Spleen (tissue), 13 donors: ENCODE measurements at regions of chr2 and their contacts with region 1.

Region 1: GRCh38 chr2:203909261-203909967 is 27.1 kb upstream of the ICOS start:
- DNase-seq: no peak
- H3K4me3 ChIP-seq: peak overlapping the region in 3 of 8 donors; percentile 21 to 51 (median 37)
- H3K27ac ChIP-seq: peak overlapping the region in 7 of 8 donors; percentile 18 to 68 (median 54)
- H3K4me1 ChIP-seq: peaks cover 0 to 28% (median 17%) of the 10 kb centered on the region in 6 donors
- H3K27me3 ChIP-seq: no peaks in the 10 kb centered on the region
- CTCF ChIP-seq: peak; percentile 25 to 81 (median 66)
- POLR2A ChIP-seq: no peak

Region 2: GRCh38 chr2:202577250-202578183 is 1331.9 kb before region 1 on chr2:
- intact Hi-C with region 1: loop called (anchors 10 kb)
- DNase-seq: no peak
- H3K4me3 ChIP-seq: no peak overlapping the region
- H3K27ac ChIP-seq: no peak overlapping the region
- H3K4me1 ChIP-seq: no peaks in the 10 kb centered on the region
- H3K27me3 ChIP-seq: no peaks in the 10 kb centered on the region
- CTCF ChIP-seq: no peak
- POLR2A ChIP-seq: no peak

Region 3: GRCh38 chr2:203484266-203485112 is 424.9 kb before region 1 on chr2:
- intact Hi-C with region 1: loop called (anchors 10 kb)
- DNase-seq: no peak
- H3K4me3 ChIP-seq: no peak overlapping the region
- H3K27ac ChIP-seq: peak overlapping the region in 1 of 8 donors; percentile 34
- H3K4me1 ChIP-seq: peaks cover 0 to 15% (median 4%) of the 10 kb centered on the region in 6 donors
- H3K27me3 ChIP-seq: no peaks in the 10 kb centered on the region
- CTCF ChIP-seq: peak; percentile 23 to 72 (median 57)
- POLR2A ChIP-seq: no peak